Mammary epithelial cell (primary cell): ENCODE measurements at regions of chr18 and their contacts with region 1.

Region 1: GRCh38 chr18:44637210-44638051 is 43.3 kb upstream of the SETBP1 start:
- DNase-seq: peak; percentile 86
- H3K4me3 ChIP-seq: peak overlapping the region in 2 of 3 experiments; percentile 17 to 21
- H3K27ac ChIP-seq: peak overlapping the region; percentile 78
- H3K4me1 ChIP-seq: peaks cover 24% of the 10 kb centered on the region
- H3K27me3 ChIP-seq: no peaks in the 10 kb centered on the region
- CTCF ChIP-seq: no peak

Region 2: GRCh38 chr18:42931491-42931890 is 1705.9 kb before region 1 on chr18:
- CTCF ChIA-PET with region 1: no interaction called
- dilution Hi-C with region 1: no loop called
- in situ Hi-C with region 1: no loop called
- intact Hi-C with region 1: no loop called
- DNase-seq: no peak
- H3K4me3 ChIP-seq: no peak overlapping the region
- H3K27ac ChIP-seq: no peak overlapping the region
- H3K4me1 ChIP-seq: no peaks in the 10 kb centered on the region
- H3K27me3 ChIP-seq: no peaks in the 10 kb centered on the region
- CTCF ChIP-seq: no peak

Region 3: GRCh38 chr18:44411277-44411905 is 226.0 kb before region 1 on chr18:
- CTCF ChIA-PET with region 1: no interaction called
- dilution Hi-C with region 1: no loop called
- in situ Hi-C with region 1: no loop called
- intact Hi-C with region 1: loop called (anchors 5 kb)
- DNase-seq: peak; percentile 59
- H3K4me3 ChIP-seq: no peak overlapping the region
- H3K27ac ChIP-seq: peak overlapping the region; percentile 55
- H3K4me1 ChIP-seq: peaks cover 29% of the 10 kb centered on the region
- H3K27me3 ChIP-seq: no peaks in the 10 kb centered on the region
- CTCF ChIP-seq: no peak